ENCODE measurements at regions of chr2 and their contacts with region 1.

Region 1: DNA sequence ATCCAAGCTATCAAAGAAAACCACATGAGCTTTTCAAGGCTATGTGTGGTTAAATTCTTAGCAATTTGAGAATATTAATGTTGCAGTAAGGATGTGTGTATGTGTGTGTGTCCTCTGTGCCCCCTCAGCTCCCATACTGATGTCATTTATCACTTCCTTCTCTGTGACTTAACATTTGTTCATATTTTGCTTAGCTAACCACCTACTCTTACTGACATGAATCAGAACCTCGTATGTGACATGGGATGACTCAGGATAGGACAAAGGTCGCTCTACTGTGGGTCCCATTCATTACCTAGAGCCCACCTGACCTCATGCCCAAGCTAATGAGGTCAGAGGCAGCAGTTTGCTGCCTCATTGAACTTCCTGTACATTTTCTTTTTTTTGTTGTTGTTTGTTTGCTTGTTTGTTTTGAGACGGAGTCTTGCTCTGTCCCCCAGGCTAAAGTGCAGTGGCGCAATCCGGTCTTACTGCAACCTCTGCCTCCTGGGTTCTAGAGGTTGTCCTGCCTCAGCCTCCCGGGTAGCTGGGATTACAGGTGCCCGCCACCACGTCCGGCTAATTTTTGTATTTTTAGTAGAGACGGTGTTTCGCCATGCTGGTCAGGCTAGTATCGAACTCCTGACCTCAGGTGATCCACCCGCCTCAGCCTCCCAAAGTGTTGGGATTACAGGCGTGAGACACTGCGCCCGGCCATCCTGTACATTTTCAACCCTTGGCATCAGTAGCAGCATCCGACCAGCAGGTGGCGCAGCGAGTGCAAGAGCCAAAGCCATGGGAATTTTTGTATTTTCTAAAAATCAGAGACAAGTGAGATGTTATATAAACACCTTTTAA is 36.4 kb downstream of the MOGAT1 start:
- DNase-seq: peak; percentile 82 to 84
- ATAC-seq: peak; percentile 23 to 84 (median 62)
- H3K4me3 ChIP-seq: no peak overlapping the region
- H3K27ac ChIP-seq: no peak overlapping the region
- H3K4me1 ChIP-seq: peaks cover 0 to 33% (median 22%) of the 10 kb centered on the region in 9 donors
- H3K27me3 ChIP-seq: no peaks in the 10 kb centered on the region
- CTCF ChIP-seq: peak; percentile 93 to 98 (median 96)

Region 2: GRCh38 chr2:222440673-222441422 is 267.1 kb before region 1 on chr2:
- intact Hi-C with region 1: no loop called
- DNase-seq: no peak
- ATAC-seq: no peak
- H3K4me3 ChIP-seq: no peak overlapping the region
- H3K27ac ChIP-seq: no peak overlapping the region
- H3K4me1 ChIP-seq: peaks cover 0 to 6% (median 0%) of the 10 kb centered on the region in 9 donors
- H3K27me3 ChIP-seq: no peaks in the 10 kb centered on the region
- CTCF ChIP-seq: no peak

Region 3: DNA sequence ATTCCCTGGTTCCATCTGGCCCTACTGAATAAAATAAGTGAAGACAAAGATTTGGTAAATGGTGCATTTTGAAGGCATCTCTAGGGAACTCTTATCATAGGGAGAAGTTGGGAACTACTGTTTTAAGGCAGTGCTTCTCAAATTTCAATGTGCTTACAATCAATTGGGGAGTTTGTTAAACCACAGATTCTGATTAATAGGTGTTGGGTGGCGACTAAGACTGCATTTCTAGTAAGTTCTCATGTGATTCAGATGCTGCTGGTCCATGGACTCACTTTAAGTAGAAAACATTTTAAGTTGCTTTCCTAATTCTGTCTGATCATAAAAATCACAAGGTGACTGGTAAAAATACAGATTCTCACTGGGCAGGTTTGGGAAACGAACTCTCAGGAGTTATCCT is 66.6 kb before region 1 on chr2:
- intact Hi-C with region 1: no loop called
- DNase-seq: no peak
- ATAC-seq: no peak
- H3K4me3 ChIP-seq: no peak overlapping the region
- H3K27ac ChIP-seq: no peak overlapping the region
- H3K4me1 ChIP-seq: no peaks in the 10 kb centered on the region
- H3K27me3 ChIP-seq: no peaks in the 10 kb centered on the region
- CTCF ChIP-seq: no peak

Region 4: DNA sequence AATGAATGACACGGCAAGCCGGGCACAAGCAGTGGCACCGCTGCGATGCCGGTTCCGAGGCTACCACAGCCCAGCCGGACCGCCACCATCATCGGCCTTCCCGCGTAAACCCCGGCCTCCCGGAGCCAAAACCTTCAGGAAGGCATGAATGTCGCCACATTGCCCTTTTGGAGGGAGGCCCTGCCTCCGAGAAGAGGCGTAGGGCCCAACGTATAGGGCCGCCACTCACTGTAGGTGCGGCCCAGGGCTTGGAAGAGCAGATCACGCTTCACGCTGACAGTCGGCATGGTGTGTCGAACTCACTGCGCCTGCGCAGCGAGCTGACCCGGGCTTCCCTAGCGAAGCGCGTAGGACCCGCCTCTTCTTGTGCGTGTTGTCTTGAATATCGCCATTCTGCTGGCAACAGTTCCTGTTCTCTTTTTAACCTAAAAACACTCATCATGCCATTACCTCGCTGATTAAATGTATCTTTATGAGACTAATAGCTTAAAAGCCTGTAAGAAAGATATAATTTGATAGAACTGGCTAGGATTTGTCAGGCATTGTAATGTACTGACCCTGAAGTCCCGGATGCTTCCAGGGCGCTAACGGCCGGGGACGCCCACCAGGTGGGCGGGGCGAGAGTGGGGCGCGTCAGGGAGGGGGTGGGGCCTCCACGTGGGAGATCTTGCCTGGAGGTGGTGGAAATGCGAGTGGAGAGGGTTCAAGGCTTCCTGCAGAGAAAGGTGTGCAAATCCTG is 52.0 kb before region 1 on chr2 and contains the start of gene FARSB:
- intact Hi-C with region 1: loop called in 1 of 10 experiments (anchors 5 kb)
- DNase-seq: peak; percentile 94 to 95
- ATAC-seq: peak; percentile 98 to 100 (median 99)
- H3K4me3 ChIP-seq: peak within 1 kb of the TSS; percentile 59 to 96 (median 86)
- H3K27ac ChIP-seq: peak within 1 kb of the TSS; percentile 69 to 95 (median 87)
- H3K4me1 ChIP-seq: peaks cover 0 to 38% (median 24%) of the 10 kb centered on the region in 9 donors
- H3K27me3 ChIP-seq: no peaks in the 10 kb centered on the region
- CTCF ChIP-seq: no peak
- total RNA-seq, gene FARSB: 16.1 to 26.6 (median 20.5) TPM

Region 5: DNA sequence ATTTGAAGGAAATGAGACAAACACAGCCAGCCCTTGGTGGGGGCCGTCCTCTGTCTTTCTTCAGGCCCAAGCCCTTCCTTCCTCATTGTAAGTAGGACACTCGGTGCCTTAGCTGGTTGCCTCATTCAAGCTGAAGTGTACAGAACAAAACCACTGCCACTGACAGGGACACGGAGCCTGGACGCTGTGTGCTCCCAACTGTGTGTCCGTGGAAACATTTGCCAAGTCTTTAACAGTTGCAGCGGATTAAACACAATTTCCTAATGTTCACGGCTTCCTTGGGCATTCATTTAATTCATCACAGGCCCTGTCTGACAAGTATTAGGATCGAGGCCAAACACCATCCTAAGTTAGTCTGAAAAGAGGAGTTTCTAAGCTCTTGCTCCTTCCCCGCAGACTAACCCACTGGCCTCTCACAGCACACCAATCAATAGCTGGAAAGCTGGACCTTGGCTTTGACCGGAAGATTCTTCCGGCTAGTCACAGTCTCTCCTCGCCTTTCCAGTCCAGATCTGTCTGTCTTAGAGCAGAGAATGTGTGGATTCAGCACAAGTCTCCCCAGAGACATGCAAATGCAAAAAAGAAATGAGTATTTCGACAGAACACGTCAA is 84.2 kb after region 1 on chr2:
- intact Hi-C with region 1: loop called in 6 of 10 experiments (anchors 5 to 10 kb)
- DNase-seq: peak; percentile 37 to 62
- ATAC-seq: peak; percentile 78 to 96 (median 88)
- H3K4me3 ChIP-seq: peak overlapping the region in 1 of 10 donors; percentile 11
- H3K27ac ChIP-seq: peak overlapping the region; percentile 68 to 90 (median 78)
- H3K4me1 ChIP-seq: peaks cover 4 to 69% (median 55%) of the 10 kb centered on the region in 9 donors
- H3K27me3 ChIP-seq: no peaks in the 10 kb centered on the region
- CTCF ChIP-seq: no peak

Region 6: GRCh38 chr2:222797261-222797660 is 89.4 kb after region 1 on chr2:
- intact Hi-C with region 1: loop called in 6 of 10 experiments (anchors 5 to 10 kb)
- DNase-seq: no peak
- ATAC-seq: peak in 4 of 8 donors; percentile 22 to 51 (median 39)
- H3K4me3 ChIP-seq: no peak overlapping the region
- H3K27ac ChIP-seq: peak overlapping the region in 4 of 10 donors; percentile 37 to 60 (median 49)
- H3K4me1 ChIP-seq: peaks cover 6 to 48% (median 33%) of the 10 kb centered on the region in 9 donors
- H3K27me3 ChIP-seq: no peaks in the 10 kb centered on the region
- CTCF ChIP-seq: peak in 7 of 9 donors; percentile 40 to 63 (median 48)

Region 7: DNA sequence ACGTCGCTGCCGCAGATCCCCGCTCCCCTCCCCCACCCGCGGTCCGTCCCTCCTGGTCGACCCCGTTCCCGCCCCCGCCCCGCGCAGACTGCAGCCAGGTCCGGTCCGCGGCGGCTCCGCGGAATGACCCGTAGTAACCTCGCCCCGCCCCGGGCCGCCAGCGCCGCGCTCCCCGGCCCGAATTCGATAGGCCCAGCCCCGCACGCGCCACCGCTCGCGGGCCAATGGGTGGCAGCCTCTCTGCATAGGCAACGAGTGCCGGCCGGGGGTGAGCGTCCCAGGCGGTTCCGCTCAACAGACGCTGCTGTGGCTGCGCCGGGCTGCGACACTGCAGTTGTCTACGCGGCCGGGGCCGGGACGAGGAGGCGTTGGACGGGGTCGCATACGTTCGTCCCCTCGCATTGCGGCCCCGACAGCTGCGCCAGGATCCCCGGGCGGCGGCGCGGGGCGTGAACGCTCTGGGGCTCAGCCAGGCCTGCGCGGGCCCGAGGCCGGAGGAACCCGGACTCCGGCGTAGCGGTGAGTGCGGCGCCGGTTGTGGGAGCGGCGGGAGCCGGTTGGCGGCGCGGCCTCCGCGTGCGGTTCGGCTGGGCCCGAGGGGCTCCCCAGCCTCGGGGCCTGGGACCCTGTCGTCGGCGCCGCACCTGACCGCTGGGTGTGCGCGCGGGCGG is 153.0 kb after region 1 on chr2 and contains the start of gene ACSL3:
- intact Hi-C with region 1: loop called (anchors 1 to 5 kb)
- DNase-seq: peak; percentile 97 to 98
- ATAC-seq: peak; percentile 96 to 99 (median 97)
- H3K4me3 ChIP-seq: peak within 1 kb of the TSS; percentile 76 to 100 (median 90)
- H3K27ac ChIP-seq: peak within 1 kb of the TSS; percentile 95 to 99 (median 98)
- H3K4me1 ChIP-seq: peaks cover 16 to 57% (median 54%) of the 10 kb centered on the region in 9 donors
- H3K27me3 ChIP-seq: no peaks in the 10 kb centered on the region
- CTCF ChIP-seq: peak in 4 of 9 donors; percentile 8 to 32 (median 18)
- total RNA-seq, gene ACSL3: 37.9 to 67.2 (median 54.8) TPM

Region 8: DNA sequence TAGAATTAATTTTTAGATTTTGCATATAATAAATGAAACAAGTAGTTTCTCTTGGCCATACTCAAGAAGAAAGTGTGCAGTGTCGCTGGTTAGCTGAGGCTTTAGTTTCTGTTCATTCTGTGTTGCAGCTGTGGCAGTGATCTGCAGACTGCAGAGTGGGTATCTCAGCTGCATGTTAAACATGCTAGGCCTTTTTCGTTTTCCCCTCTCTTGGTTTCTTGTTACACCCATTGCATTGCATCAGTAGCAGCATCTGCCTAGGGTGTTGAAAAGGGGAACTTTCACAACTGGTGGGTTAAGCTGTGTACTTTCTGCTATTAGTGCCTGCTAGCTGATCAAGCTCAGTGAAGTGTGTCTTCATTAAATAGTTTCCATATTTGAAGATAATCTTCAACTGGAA is 204.2 kb after region 1 on chr2:
- intact Hi-C with region 1: loop called in 2 of 10 experiments (anchors 5 kb)
- DNase-seq: no peak
- ATAC-seq: peak in 5 of 8 donors; percentile 17 to 72 (median 43)
- H3K4me3 ChIP-seq: no peak overlapping the region
- H3K27ac ChIP-seq: peak overlapping the region in 1 of 10 donors; percentile 48
- H3K4me1 ChIP-seq: peaks cover under 1 to 44% (median 28%) of the 10 kb centered on the region in 9 donors
- H3K27me3 ChIP-seq: no peaks in the 10 kb centered on the region
- CTCF ChIP-seq: no peak

Measured in heart right ventricle (tissue), 16 donors.